K562 (cell line): ENCODE measurements at regions of chr4 and their contacts with region 1.

Region 1: DNA sequence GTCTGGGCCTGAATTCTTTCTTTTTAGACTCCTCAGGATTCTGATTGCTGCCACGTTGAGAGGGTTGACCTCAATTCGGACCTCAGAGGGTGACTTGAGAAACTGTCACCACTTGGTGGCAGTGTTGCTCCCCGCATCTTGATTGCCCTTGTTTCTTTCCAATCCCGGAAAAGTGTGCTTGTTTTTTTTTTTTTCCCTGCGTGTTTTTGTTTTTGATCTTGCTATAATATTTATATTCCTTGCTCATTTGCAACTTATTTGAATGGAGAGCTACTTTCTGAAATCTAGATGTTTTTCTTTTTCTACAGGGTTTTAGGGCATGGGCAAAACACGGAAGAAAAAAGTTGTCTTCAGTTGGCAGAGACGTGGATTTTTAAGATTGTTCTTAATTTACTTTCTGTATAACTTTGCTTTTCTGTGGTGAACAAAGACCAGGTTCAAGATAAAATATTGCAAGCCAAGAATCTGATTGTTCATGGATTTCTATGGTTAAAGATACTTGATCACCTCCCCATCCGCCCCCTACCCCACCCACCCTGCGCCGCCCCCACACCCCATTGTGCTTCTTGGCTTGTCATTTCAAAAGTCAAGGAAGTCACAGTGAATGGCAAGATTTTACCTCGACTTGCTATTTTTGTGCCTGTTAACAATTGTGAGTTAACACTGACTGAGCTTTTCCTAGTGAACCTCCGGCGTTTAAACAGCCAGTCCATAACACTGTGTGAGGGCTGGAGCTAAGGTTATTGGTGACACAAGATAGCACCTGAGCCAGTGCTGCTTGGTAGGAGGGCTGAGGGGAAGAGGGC is 102.1 kb downstream of the PTTG2 start:
- DNase-seq: peak; percentile 62 to 86 (median 66)
- ATAC-seq: peak; percentile 92
- H3K4me3 ChIP-seq: no peak overlapping the region
- H3K27ac ChIP-seq: no peak overlapping the region
- H3K4me1 ChIP-seq: peaks cover 4 to 10% of the 10 kb centered on the region in 2 experiments; a peak in 2 of 5 replicates
- H3K27me3 ChIP-seq: peaks cover 4 to 8% of the 10 kb centered on the region in 2 experiments; a peak in 3 of 5 replicates
- CTCF ChIP-seq: peak; percentile 67 to 83 (median 83)
- EP300 ChIP-seq: no peak
- POLR2A ChIP-seq: no peak
- RAD21 ChIP-seq: peak; percentile 71 to 72

Region 2: DNA sequence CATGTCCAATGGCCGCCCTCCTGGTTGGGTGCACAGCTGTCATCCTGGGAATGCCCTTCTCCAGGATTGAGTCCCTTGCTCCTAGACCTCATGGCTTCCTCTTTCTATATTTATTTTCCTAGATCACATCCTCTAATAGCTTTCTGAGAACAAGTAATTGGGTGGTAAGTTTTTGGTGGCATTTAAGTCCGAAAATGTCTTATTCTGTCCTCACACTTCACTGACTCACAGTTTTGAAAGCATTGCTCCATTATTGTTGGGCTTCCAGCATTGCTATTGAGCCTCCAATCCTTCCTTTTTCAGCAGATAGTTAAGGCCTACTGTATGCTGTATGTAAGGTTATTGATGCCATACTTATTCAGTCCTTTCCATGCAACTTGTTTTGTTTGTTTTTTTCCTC is 209.9 kb before region 1 on chr4:
- CTCF ChIA-PET with region 1: no interaction called
- POLR2A ChIA-PET with region 1: no interaction called
- in situ Hi-C with region 1: no loop called
- intact Hi-C with region 1: no loop called
- DNase-seq: no peak
- ATAC-seq: no peak
- H3K4me3 ChIP-seq: no peak overlapping the region
- H3K27ac ChIP-seq: no peak overlapping the region
- H3K4me1 ChIP-seq: no peaks in the 10 kb centered on the region
- H3K27me3 ChIP-seq: no peaks in the 10 kb centered on the region
- CTCF ChIP-seq: no peak
- EP300 ChIP-seq: no peak
- POLR2A ChIP-seq: no peak
- RAD21 ChIP-seq: no peak

Region 3: GRCh38 chr4:38387348-38387747 is 325.1 kb after region 1 on chr4:
- CTCF ChIA-PET with region 1: no interaction called
- POLR2A ChIA-PET with region 1: no interaction called
- in situ Hi-C with region 1: no loop called
- intact Hi-C with region 1: loop called (anchors 10 kb)
- DNase-seq: peak in 2 of 4 experiments; percentile 35 to 66
- ATAC-seq: peak; percentile 28
- H3K4me3 ChIP-seq: no peak overlapping the region
- H3K27ac ChIP-seq: no peak overlapping the region
- H3K4me1 ChIP-seq: peaks cover 9 to 48% of the 10 kb centered on the region in 2 experiments
- H3K27me3 ChIP-seq: no peaks in the 10 kb centered on the region
- CTCF ChIP-seq: no peak
- EP300 ChIP-seq: no peak
- POLR2A ChIP-seq: no peak
- RAD21 ChIP-seq: peak in 1 of 2 experiments; percentile 10; a peak in 1 of 4 replicates

Region 4: DNA sequence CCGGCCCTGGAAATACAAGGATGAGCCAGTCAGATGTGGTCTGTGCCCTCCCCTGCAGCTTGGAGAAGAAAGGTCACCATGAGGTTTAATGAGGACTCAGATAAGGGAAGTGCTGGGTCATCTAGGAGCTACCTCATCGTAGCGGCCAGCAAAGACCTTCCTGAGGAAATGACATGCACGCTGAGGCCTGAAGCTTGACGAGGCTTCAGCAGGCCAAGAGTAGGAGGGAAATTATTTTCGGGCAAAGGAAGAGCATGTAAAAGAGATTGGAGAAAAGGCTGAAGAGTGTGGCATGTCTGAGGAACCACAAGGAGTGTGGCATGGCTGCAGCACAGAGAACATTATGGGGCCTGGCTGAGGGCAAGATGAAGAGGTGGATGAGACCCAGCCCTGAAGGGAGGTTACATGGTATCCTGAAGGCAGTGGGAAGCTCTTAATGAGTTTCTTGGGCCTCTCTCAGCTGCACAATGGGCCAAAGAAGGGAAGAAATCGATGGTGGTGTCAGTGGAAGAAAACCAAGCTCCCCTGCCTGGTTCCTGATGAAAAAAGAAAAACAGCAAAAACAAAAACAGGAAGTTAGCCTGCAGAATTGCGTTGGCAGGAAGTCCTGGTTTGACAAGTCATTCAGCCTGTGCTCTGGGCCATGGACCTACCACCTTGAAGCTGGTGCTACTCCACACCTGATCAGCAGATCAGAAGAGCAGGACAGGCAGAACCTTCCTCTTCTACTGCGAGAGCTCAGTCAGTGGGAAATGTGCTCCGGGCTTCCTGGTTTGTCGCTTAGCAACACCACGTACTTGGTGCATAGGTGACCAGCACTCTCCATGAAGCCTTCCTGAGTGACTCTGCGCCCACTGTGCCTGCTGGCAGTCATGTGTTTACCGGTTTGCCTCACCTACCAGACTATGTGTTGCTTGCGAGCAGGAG is 467.2 kb after region 1 on chr4:
- CTCF ChIA-PET with region 1: no interaction called
- POLR2A ChIA-PET with region 1: no interaction called
- in situ Hi-C with region 1: no loop called
- intact Hi-C with region 1: loop called (anchors 10 kb)
- DNase-seq: peak; percentile 83 to 95 (median 88)
- ATAC-seq: peak; percentile 95
- H3K4me3 ChIP-seq: no peak overlapping the region
- H3K27ac ChIP-seq: peak overlapping the region; percentile 98
- H3K4me1 ChIP-seq: peaks cover 22 to 34% of the 10 kb centered on the region in 2 experiments
- H3K27me3 ChIP-seq: no peaks in the 10 kb centered on the region
- CTCF ChIP-seq: peak in 1 of 3 experiments; percentile 14; a peak in 1 of 6 replicates
- EP300 ChIP-seq: peak; percentile 91
- POLR2A ChIP-seq: peak; percentile 71
- RAD21 ChIP-seq: peak; percentile 36 to 45

Region 5: GRCh38 chr4:38730830-38731646 is 668.7 kb after region 1 on chr4:
- CTCF ChIA-PET with region 1: interaction called, 20 read pairs
- POLR2A ChIA-PET with region 1: no interaction called
- in situ Hi-C with region 1: loop called (anchors 5 kb)
- intact Hi-C with region 1: loop called (anchors 1 kb)
- DNase-seq: peak; percentile 75 to 87 (median 84)
- ATAC-seq: peak; percentile 98
- H3K4me3 ChIP-seq: no peak overlapping the region
- H3K27ac ChIP-seq: no peak overlapping the region
- H3K4me1 ChIP-seq: peaks cover 0 to 2% of the 10 kb centered on the region in 2 experiments; a peak in 3 of 5 replicates
- H3K27me3 ChIP-seq: no peaks in the 10 kb centered on the region
- CTCF ChIP-seq: peak; percentile 86 to 96 (median 88)
- EP300 ChIP-seq: no peak
- POLR2A ChIP-seq: no peak
- RAD21 ChIP-seq: peak; percentile 95 to 98

Region 6: GRCh38 chr4:38782452-38783108 is 720.3 kb after region 1 on chr4 and contains the start of gene TLR10:
- CTCF ChIA-PET with region 1: interaction called, 14 read pairs
- POLR2A ChIA-PET with region 1: no interaction called
- in situ Hi-C with region 1: no loop called
- intact Hi-C with region 1: loop called (anchors 2 kb)
- DNase-seq: peak; percentile 39 to 60 (median 42)
- ATAC-seq: peak; percentile 84
- H3K4me3 ChIP-seq: no peak within 1 kb of the TSS
- H3K27ac ChIP-seq: no peak within 1 kb of the TSS
- H3K4me1 ChIP-seq: no peaks in the 10 kb centered on the region
- H3K27me3 ChIP-seq: peaks cover 0 to 9% of the 10 kb centered on the region in 2 experiments; a peak in 3 of 5 replicates
- CTCF ChIP-seq: peak; percentile 52 to 72 (median 59)
- EP300 ChIP-seq: no peak
- POLR2A ChIP-seq: no peak
- RAD21 ChIP-seq: peak; percentile 60 to 71
- polyA plus RNA-seq, gene TLR10: not detected

Region 7: DNA sequence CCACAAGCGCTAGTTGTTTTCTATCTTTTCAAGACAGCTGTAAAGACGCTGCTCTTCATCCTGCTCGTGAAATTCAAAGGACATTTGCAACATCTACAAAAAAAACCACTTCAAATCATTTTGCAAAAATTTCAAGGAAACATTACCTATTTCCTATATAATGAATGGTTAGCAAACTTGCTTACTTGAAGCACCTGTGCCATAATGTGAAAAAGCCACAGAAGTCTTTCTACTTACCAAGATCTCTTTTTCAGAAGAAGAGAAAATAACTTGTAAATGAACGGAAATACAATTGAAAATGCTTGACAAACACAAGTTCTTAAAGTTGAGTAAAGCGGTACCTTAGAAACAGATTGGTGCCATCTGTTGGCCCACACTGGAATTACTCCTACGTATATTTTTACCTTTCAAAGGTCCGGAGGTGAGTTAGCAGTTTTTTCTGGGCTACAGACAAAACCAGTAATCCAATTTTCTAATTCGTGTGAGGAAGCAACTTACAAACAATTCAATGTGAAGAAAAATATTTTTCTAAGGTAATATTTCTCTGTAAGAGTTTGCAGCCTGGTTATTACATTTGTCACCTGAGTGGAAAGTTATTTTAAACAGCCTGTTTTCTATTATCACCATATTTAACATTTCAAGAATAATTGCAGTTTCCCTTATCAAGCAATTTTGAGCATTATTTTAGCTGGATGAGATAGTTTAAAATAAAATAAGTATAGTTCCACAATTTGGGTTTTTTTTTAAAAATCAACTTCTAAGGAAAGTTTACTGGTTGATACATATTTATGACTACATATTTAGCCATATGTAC is 794.4 kb after region 1 on chr4 and contains the start of gene TLR6:
- CTCF ChIA-PET with region 1: no interaction called
- POLR2A ChIA-PET with region 1: no interaction called
- in situ Hi-C with region 1: no loop called
- intact Hi-C with region 1: loop called (anchors 5 kb)
- DNase-seq: peak; percentile 51 to 89 (median 60)
- ATAC-seq: peak; percentile 78
- H3K4me3 ChIP-seq: peak within 1 kb of the TSS; percentile 20; the same call in 1 of the 2 replicates
- H3K27ac ChIP-seq: peak within 1 kb of the TSS; percentile 54
- H3K4me1 ChIP-seq: peaks cover 0 to 20% of the 10 kb centered on the region in 2 experiments; a peak in 3 of 5 replicates
- H3K27me3 ChIP-seq: no peaks in the 10 kb centered on the region; a peak in 1 of 5 replicates
- CTCF ChIP-seq: peak; percentile 66 to 87 (median 73)
- EP300 ChIP-seq: 0 out of 2 replicates have a peak, but pooled peaks have one; percentile 34
- POLR2A ChIP-seq: no peak
- RAD21 ChIP-seq: peak; percentile 70 to 76
- polyA plus RNA-seq, gene TLR6: 0.08 to 0.45 TPM

Region 8: GRCh38 chr4:39134683-39135319 is 1072.5 kb after region 1 on chr4:
- CTCF ChIA-PET with region 1: no interaction called
- POLR2A ChIA-PET with region 1: no interaction called
- in situ Hi-C with region 1: loop called (anchors 25 kb)
- intact Hi-C with region 1: loop called (anchors 10 kb)
- DNase-seq: no peak
- ATAC-seq: no peak
- H3K4me3 ChIP-seq: no peak overlapping the region
- H3K27ac ChIP-seq: no peak overlapping the region
- H3K4me1 ChIP-seq: peaks cover 0 to 2% of the 10 kb centered on the region in 2 experiments; a peak in 1 of 5 replicates
- H3K27me3 ChIP-seq: no peaks in the 10 kb centered on the region
- CTCF ChIP-seq: no peak
- EP300 ChIP-seq: no peak
- POLR2A ChIP-seq: no peak
- RAD21 ChIP-seq: no peak